BJ (cell line): ENCODE measurements at regions of chr3 and their contacts with region 1.

Region 1: GRCh38 chr3:129316131-129317013 is 37.7 kb downstream of the HMCES start:
- DNase-seq: no peak
- H3K4me3 ChIP-seq: peak overlapping the region; percentile 71
- H3K27me3 ChIP-seq: no peaks in the 10 kb centered on the region
- CTCF ChIP-seq: peak; percentile 57

Region 2: GRCh38 chr3:129238945-129239706 is 77.2 kb before region 1 on chr3:
- CTCF ChIA-PET with region 1: no interaction called
- POLR2A ChIA-PET with region 1: no interaction called
- DNase-seq: no peak
- H3K4me3 ChIP-seq: no peak overlapping the region
- H3K27me3 ChIP-seq: no peaks in the 10 kb centered on the region
- CTCF ChIP-seq: no peak

Region 3: GRCh38 chr3:129278439-129278970 is 37.9 kb before region 1 on chr3 and contains the start of gene HMCES:
- CTCF ChIA-PET with region 1: interaction called, 12 read pairs
- POLR2A ChIA-PET with region 1: no interaction called
- DNase-seq: no peak
- H3K4me3 ChIP-seq: peak within 1 kb of the TSS; percentile 88
- H3K27me3 ChIP-seq: no peaks in the 10 kb centered on the region
- CTCF ChIP-seq: no peak
- polyA plus RNA-seq, gene HMCES: 23.1 and 27.2 TPM in 2 replicates

Region 4: DNA sequence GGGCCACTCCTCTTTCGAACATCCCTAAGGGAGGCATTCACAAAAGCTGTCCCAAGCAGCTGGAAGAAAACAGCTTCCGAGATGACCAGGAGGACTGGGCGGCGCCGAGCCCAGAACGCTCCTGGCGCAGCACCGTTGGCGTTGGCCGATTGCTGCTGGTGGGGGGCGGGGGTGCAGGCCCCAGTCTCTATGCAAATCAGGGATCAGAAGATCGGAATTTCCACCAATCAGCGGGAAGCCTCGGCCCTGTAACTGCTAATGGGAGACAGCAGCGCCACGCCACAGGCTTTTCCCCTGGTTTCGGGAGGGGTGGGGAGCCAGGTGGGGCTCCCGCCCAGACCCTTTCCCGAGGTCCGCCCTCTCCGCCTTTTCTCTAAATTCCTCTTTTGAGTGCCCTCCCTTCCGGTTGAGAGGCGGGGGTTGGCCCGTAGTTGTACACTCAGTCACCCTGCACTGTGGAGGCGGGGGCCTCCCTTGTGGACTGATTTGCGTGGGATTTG is 10.7 kb before region 1 on chr3:
- CTCF ChIA-PET with region 1: interaction called, 7 read pairs
- POLR2A ChIA-PET with region 1: interaction called, 12 read pairs
- DNase-seq: peak; percentile 80
- H3K4me3 ChIP-seq: peak overlapping the region; percentile 7; the same call in 1 of the 2 replicates
- H3K27me3 ChIP-seq: no peaks in the 10 kb centered on the region
- CTCF ChIP-seq: 0 out of 2 replicates have a peak, but pooled peaks have one; percentile 8

Region 5: DNA sequence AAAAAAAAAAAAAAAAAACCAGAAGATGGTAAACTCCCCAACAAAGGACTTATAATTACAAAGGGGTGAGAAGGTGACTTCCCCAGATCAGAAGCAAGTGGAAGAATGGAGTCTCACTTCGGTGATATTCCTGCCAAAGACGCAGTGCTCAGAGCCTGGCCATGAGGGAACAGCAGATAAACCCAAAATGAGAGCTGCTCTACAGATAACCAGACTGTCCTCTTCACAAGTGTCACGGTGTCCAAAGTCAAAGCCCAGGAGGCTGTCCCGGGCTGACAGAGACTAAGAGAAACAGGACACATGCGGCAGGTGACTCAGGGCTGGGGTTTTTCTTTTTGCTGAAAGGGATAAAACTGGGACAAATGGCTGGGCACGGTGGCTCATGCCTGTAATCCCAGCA is 11.1 kb after region 1 on chr3:
- CTCF ChIA-PET with region 1: interaction called, 14 read pairs
- POLR2A ChIA-PET with region 1: no interaction called
- DNase-seq: no peak
- H3K4me3 ChIP-seq: no peak overlapping the region
- H3K27me3 ChIP-seq: no peaks in the 10 kb centered on the region
- CTCF ChIP-seq: no peak